Cardiac septum (tissue), 1 donor: ENCODE measurements at regions of chrX and their contacts with region 1.

Region 1: DNA sequence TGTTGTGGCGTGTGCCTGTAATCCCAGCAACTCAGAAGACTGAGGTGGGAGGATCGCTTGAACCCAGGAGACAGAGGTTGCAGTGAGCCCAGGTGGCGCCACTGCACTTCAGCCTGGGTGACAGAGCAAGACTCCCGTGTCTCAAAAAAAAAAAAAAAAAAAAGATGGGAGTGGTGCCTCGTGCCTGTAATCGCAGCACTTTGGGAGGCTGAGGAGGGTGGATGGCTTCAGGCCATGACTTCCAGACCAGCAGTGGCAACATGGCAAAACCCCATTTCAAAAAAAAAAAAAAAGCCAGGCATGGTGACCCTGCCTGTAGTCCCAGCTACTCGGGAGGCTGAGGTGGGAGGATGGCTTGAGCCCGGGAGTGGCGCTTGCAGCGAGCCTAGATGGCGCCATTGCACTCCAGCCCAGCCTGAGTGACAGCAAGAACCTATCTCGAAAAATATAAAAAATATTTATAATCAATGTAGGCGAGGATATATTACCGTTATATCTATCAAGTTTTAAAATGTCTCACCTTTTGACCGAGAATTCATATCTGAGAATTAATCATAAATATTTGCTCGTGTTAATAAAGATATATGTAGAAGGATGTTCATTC is 27.0 kb downstream of the EIF2S3 start:
- DNase-seq: no peak

Region 2: DNA sequence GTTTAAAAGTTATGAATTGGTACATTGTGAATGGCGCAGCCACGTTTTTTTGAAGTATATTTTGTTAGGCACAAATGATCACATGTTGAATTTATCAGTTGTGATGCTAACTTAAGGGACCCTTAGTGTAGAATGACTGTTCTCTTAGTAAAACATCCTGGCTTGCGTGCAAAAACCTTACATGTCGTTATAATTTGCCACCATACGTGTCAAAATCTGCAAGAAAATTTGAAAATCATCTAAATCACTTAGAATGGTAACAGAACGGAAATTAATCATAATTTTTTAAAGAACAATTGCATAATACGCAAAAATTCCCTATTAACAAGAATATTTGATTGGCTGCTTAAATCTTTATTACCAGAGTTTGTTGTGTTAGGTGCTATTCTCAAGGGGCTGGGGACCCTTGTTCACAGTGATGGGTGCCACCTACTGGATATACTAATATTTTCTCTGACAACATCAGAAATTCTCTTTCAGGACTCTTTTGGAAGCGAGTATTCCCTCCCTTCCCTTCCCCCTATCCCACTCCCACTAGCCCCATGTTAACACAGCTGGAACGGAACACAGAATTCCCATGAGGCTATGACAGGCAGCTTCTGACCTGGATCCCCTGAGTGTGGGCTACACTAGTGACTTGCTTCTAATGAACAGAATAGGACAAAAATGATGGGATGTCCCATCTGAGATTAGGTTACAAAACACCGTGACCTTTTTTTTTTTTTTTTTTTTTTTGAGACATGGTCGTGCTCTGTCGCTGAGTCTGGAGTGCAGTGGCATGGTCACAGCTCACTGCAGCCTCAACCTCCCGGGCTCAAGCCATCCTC is 160.3 kb after region 1 on chrX:
- intact Hi-C with region 1: loop called (anchors 5 kb)
- DNase-seq: no peak